GM12878 (cell line): ENCODE measurements at regions of chr12 and their contacts with region 1.

Region 1: DNA sequence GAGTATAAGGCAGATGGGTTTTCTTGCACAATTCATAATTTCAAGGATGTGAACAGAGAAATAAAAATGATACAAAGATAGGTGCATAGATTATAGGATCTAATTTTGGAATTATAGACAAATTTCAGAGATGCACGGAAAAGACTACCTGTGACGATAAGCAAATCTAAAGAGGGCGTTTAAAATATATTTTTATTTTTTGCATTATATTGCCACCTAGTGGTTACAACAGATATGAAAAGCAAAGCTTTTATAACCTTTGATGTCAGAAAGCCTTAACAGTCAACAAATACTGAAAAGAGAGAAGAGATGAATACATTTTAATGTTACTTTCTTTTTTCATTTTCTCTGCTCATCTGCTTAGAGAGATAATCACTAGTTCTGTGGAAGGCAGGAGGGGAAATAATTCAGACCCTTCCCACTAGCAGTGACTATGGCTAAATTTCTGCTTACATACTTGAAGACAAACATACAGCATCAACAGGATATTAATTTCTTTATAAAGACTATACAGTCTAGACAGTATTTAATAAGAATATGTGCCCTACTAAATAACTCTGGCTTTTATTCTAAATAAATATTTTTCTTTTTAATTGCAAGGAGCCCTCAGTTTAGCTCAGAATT is 46.3 kb downstream of the NTS start:
- DNase-seq: no peak
- ATAC-seq: peak; percentile 65; the same call in 2 of the 3 replicates
- H3K4me3 ChIP-seq: no peak overlapping the region
- H3K27ac ChIP-seq: no peak overlapping the region
- H3K4me1 ChIP-seq: no peaks in the 10 kb centered on the region
- H3K27me3 ChIP-seq: no peaks in the 10 kb centered on the region
- CTCF ChIP-seq: peak; percentile 31 to 48 (median 46); a peak in 4 of 6 replicates
- EP300 ChIP-seq: no peak
- POLR2A ChIP-seq: no peak
- RAD21 ChIP-seq: peak; percentile 34; the same call in 1 of the 2 replicates

Region 2: GRCh38 chr12:85076688-85077430 is 843.6 kb before region 1 on chr12:
- CTCF ChIA-PET with region 1: interaction called, 7 read pairs
- POLR2A ChIA-PET with region 1: no interaction called
- RAD21 ChIA-PET with region 1: interaction called, 6 read pairs
- SMC1A ChIA-PET with region 1: interaction called, 3 read pairs
- in situ Hi-C with region 1: no loop called
- intact Hi-C with region 1: loop called (anchors 10 kb)
- DNase-seq: no peak
- ATAC-seq: peak; percentile 88
- H3K4me3 ChIP-seq: no peak overlapping the region
- H3K27ac ChIP-seq: no peak overlapping the region
- H3K4me1 ChIP-seq: no peaks in the 10 kb centered on the region
- H3K27me3 ChIP-seq: no peaks in the 10 kb centered on the region
- CTCF ChIP-seq: peak; percentile 28 to 45 (median 30); a peak in 2 of 6 replicates
- EP300 ChIP-seq: no peak
- POLR2A ChIP-seq: no peak
- RAD21 ChIP-seq: peak; percentile 48; the same call in 1 of the 2 replicates

Region 3: DNA sequence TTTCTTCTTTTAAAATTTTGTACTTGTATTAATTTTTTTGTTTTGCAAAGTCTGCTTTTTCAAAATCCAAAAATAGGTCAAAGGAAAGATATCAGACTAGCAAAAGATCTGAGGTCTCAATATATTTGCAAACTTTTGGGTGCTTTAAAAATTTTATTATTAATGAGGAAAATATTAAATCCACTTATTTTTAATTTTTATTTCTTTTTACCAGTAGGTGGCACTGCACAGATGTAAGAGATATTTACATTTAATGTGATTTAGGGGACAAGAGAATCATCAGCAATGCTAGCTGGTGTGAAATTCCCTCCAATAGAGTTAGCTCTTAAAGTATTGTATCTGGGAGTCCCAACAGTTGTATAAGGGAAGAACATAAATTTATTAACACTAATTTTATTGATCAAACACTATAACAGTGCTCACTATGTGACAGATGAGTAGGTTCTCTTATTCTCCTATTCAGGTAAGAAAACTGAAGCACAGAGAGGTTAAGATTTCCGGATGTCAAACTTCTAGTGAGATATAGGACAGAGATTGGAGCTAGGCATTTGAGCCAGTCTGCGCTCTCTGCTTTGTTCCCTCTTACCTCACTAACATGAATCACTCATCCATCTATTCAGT is 609.9 kb before region 1 on chr12:
- CTCF ChIA-PET with region 1: interaction called, 11 read pairs
- POLR2A ChIA-PET with region 1: no interaction called
- RAD21 ChIA-PET with region 1: no interaction called
- SMC1A ChIA-PET with region 1: interaction called, 8 read pairs
- in situ Hi-C with region 1: no loop called
- intact Hi-C with region 1: loop called (anchors 5 kb)
- DNase-seq: no peak
- ATAC-seq: no peak
- H3K4me3 ChIP-seq: no peak overlapping the region
- H3K27ac ChIP-seq: no peak overlapping the region
- H3K4me1 ChIP-seq: no peaks in the 10 kb centered on the region
- H3K27me3 ChIP-seq: no peaks in the 10 kb centered on the region
- CTCF ChIP-seq: peak in 2 of 3 experiments; percentile 5 to 30; a peak in 2 of 6 replicates
- EP300 ChIP-seq: no peak
- POLR2A ChIP-seq: no peak
- RAD21 ChIP-seq: no peak; the same call in 1 of the 2 replicates

Region 4: GRCh38 chr12:85468356-85469157 is 451.9 kb before region 1 on chr12:
- CTCF ChIA-PET with region 1: interaction called, 24 read pairs
- POLR2A ChIA-PET with region 1: no interaction called
- RAD21 ChIA-PET with region 1: interaction called, 8 read pairs
- SMC1A ChIA-PET with region 1: interaction called, 7 read pairs
- in situ Hi-C with region 1: no loop called
- intact Hi-C with region 1: loop called (anchors 1 kb)
- DNase-seq: peak; percentile 23
- ATAC-seq: peak; percentile 95
- H3K4me3 ChIP-seq: peak overlapping the region; percentile 31; the same call in 1 of the 2 replicates
- H3K27ac ChIP-seq: no peak overlapping the region
- H3K4me1 ChIP-seq: 0 out of 2 replicates have a peak, but pooled peaks cover 2% of the 10 kb centered on the region
- H3K27me3 ChIP-seq: no peaks in the 10 kb centered on the region
- CTCF ChIP-seq: peak; percentile 69 to 86 (median 79)
- EP300 ChIP-seq: no peak
- POLR2A ChIP-seq: no peak
- RAD21 ChIP-seq: peak; percentile 98

Region 5: GRCh38 chr12:85575120-85576096 is 345.0 kb before region 1 on chr12:
- CTCF ChIA-PET with region 1: interaction called, 6 read pairs
- POLR2A ChIA-PET with region 1: no interaction called
- RAD21 ChIA-PET with region 1: interaction called, 5 read pairs
- SMC1A ChIA-PET with region 1: interaction called, 3 read pairs
- in situ Hi-C with region 1: no loop called
- intact Hi-C with region 1: loop called (anchors 5 kb)
- DNase-seq: peak; percentile 13
- ATAC-seq: peak; percentile 100
- H3K4me3 ChIP-seq: no peak overlapping the region
- H3K27ac ChIP-seq: no peak overlapping the region
- H3K4me1 ChIP-seq: no peaks in the 10 kb centered on the region
- H3K27me3 ChIP-seq: no peaks in the 10 kb centered on the region
- CTCF ChIP-seq: peak; percentile 68 to 74 (median 68)
- EP300 ChIP-seq: no peak
- POLR2A ChIP-seq: no peak
- RAD21 ChIP-seq: peak; percentile 76

Region 6: DNA sequence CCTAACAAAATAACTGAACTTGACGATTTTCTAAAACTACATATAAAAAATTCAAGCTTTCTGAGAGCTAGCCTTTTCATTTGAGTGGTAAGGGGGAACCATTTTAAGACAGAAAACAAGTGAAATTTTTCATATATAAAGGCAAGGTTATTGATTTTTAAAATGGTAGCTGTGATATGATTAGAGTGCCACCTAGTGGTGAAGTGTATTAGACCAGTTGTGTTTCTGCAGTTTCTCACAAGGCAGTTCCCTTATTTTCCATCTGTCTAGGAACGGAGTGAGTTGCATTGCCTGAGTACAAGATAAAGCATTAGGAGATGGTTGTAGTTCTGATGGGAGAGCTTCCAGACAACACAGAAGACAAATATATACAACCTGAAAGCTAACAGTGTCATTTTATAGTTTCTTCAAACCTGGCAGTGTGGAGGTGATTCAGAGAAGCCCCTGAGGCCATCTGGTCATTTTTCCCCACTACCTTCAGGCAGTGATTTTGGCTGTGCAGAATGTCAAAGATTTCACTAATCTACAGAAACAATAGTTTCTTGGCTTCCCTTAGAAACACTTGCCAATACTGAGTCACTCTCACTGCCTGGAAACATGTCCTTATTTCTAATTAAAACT is 1927.9 kb after region 1 on chr12:
- CTCF ChIA-PET with region 1: interaction called, 6 read pairs
- POLR2A ChIA-PET with region 1: no interaction called
- RAD21 ChIA-PET with region 1: interaction called, 4 read pairs
- SMC1A ChIA-PET with region 1: no interaction called
- in situ Hi-C with region 1: no loop called
- intact Hi-C with region 1: loop called (anchors 5 kb)
- DNase-seq: peak; percentile 12
- ATAC-seq: peak; percentile 74
- H3K4me3 ChIP-seq: no peak overlapping the region
- H3K27ac ChIP-seq: no peak overlapping the region
- H3K4me1 ChIP-seq: no peaks in the 10 kb centered on the region
- H3K27me3 ChIP-seq: no peaks in the 10 kb centered on the region; a peak in 1 of 4 replicates
- CTCF ChIP-seq: peak; percentile 60 to 72 (median 67); a peak in 5 of 6 replicates
- EP300 ChIP-seq: no peak
- POLR2A ChIP-seq: no peak
- RAD21 ChIP-seq: peak; percentile 81